Activated CD4-positive, alpha-beta T cell treated with anti-CD3 and anti-CD28 coated beads for 36 hours (primary cell): ENCODE measurements at regions of chr1 and their contacts with region 1.

Region 1: DNA sequence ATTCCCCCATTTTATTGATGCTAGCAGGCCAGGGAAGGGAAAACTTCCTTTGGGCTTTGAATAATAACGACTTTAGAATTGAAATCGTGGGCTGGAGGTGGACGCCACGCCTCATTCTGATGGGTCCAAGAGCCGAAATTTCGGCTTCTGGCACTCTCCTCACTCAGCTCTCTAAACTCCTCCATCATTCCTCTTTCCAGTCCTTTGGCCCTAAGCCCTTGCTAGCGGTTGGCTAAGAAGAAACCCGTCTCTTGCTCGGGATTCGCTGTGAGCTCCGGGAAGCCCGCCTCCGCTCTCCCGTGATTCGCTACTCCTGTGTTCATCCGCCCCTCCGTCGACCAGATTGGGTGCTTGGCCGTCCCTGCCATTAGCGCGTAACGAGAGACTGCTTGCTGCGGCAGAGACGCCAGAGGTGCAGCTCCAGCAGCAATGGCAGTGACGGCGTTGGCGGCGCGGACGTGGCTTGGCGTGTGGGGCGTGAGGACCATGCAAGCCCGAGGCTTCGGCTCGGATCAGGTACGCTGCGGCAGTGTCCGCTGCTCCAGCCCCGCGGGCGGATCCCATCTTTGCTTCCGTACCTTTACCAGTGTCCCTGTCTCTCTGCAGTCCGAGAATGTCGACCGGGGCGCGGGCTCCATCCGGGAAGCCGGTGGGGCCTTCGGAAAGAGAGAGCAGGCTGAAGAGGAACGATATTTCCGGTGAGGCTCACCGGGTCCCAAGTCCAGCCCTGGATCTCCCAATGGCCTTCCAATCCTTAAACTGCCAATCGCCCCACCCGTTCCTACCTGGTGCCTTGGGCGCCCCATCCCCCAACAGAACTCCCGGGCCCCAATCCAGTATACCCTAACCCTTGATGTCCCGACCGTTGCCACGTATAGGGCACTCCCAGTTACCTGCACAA is at the start of gene ATP5IF1:
- DNase-seq: peak; percentile 97
- ATAC-seq: peak; percentile 97
- H3K4me3 Mint-ChIP-seq: no peak within 1 kb of the TSS
- H3K27ac Mint-ChIP-seq: no peak within 1 kb of the TSS
- H3K4me1 Mint-ChIP-seq: peaks cover 15% of the 10 kb centered on the region
- H3K27me3 Mint-ChIP-seq: no peaks in the 10 kb centered on the region
- total RNA-seq, gene ATP5IF1: 192 to 195 TPM

Region 2: DNA sequence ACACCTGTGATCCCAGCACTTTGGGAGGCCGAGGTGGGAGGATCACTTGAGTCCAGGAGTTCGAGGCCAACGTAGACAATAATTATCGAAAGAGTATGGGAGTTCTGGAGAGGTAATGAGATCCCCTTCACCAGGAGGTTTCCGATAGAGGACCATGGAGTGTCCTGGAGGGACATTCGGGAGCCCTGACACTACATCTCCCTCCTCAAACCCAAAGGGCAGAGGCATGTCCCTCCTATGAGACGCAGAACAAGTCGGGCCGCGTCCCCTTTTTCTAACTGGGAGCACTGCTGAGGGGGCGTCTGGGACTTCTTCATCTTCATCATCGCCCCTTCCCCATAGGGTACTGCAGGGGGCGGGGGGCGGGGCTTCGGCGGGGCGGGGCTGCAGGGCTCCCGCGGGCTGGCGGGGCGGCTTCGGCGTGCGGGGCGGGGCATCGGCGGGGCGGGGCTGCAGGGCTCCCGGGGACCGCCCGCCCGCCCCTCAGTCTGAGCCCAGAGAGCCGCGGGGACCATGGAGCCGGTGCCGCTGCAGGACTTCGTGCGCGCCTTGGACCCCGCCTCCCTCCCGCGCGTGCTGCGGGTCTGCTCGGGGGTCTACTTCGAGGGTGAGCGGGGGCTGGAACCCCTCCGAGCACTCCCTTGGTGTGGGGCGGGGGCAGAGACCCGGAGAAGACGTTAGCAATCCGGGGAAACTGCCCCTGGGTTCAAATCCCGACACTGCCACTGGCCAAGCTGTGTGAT is 363.8 kb before region 1 on chr1 and contains the start of gene THEMIS2:
- CTCF ChIA-PET with region 1: no interaction called
- POLR2A ChIA-PET with region 1: no interaction called
- intact Hi-C with region 1: loop called in 1 of 2 experiments (anchors 1 kb)
- DNase-seq: peak; percentile 90
- ATAC-seq: peak; percentile 81
- H3K4me3 Mint-ChIP-seq: peak within 1 kb of the TSS; percentile 87
- H3K27ac Mint-ChIP-seq: peak within 1 kb of the TSS; percentile 83
- H3K4me1 Mint-ChIP-seq: peaks cover 36% of the 10 kb centered on the region
- H3K27me3 Mint-ChIP-seq: no peaks in the 10 kb centered on the region
- total RNA-seq, gene THEMIS2: 14.2 to 16.2 TPM

Region 3: DNA sequence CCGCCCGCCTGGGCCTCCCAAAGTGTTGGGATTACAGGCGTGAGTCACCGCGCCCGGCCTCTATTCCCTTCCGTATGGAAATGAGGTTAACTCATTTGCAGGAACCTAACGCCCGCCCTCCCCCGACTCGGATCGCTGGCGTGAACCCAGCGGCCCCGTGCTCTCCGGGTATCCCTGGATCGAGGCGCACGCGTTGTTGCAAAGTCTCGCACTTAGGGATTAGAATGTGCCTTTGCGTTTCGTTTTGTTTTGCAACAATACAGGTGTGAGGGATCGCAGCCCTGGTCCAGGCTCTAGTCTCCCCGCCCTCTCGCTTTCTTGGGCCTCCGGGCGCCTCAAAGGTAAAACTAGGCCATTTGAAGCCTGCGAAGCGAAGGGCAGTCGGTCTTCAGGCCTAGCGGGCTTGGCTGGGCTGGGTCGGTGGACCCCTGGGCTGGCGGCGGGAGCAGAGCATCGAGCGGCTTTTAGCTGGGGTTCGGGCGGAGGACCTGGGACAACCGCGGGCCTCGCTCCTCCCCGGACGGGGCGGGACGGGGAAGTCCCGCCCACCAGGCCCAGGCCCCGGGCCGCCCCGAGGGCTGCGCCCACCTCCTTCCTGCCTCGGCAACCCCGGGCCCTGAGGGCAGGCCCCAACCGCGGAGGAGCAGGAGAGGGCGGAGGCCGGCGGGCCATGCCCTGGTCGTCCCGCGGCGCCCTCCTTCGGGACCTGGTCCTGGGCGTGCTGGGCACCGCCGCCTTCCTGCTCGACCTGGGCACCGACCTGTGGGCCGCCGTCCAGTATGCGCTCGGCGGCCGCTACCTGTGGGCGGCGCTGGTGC is 276.4 kb before region 1 on chr1 and contains the start of gene XKR8:
- CTCF ChIA-PET with region 1: no interaction called
- POLR2A ChIA-PET with region 1: no interaction called
- intact Hi-C with region 1: loop called in 1 of 2 experiments (anchors 1 kb)
- DNase-seq: peak; percentile 89
- ATAC-seq: peak; percentile 98
- H3K4me3 Mint-ChIP-seq: peak within 1 kb of the TSS; percentile 77
- H3K27ac Mint-ChIP-seq: peak within 1 kb of the TSS; percentile 84
- H3K4me1 Mint-ChIP-seq: peaks cover 17% of the 10 kb centered on the region
- H3K27me3 Mint-ChIP-seq: no peaks in the 10 kb centered on the region
- total RNA-seq, gene XKR8: 4.2 to 6.0 TPM

Region 4: GRCh38 chr1:28259307-28260167 is 23.5 kb after region 1 on chr1 and contains the start of gene SESN2:
- CTCF ChIA-PET with region 1: interaction called, 5 read pairs
- POLR2A ChIA-PET with region 1: interaction called, 4 read pairs
- intact Hi-C with region 1: loop called (anchors 1 kb)
- DNase-seq: peak; percentile 100
- ATAC-seq: peak; percentile 93
- H3K4me3 Mint-ChIP-seq: peak within 1 kb of the TSS; percentile 81
- H3K27ac Mint-ChIP-seq: peak within 1 kb of the TSS; percentile 99
- H3K4me1 Mint-ChIP-seq: peaks cover 42% of the 10 kb centered on the region
- H3K27me3 Mint-ChIP-seq: no peaks in the 10 kb centered on the region
- total RNA-seq, gene SESN2: 32.9 to 33.3 TPM

Region 5: GRCh38 chr1:28369371-28370238 is 133.6 kb after region 1 on chr1 and contains the start of gene PHACTR4:
- CTCF ChIA-PET with region 1: no interaction called
- POLR2A ChIA-PET with region 1: interaction called, 3 read pairs
- intact Hi-C with region 1: loop called in 1 of 2 experiments (anchors 1 kb)
- DNase-seq: peak; percentile 90
- ATAC-seq: peak; percentile 93
- H3K4me3 Mint-ChIP-seq: peak within 1 kb of the TSS; percentile 92
- H3K27ac Mint-ChIP-seq: peak within 1 kb of the TSS; percentile 92
- H3K4me1 Mint-ChIP-seq: peaks cover 25% of the 10 kb centered on the region
- H3K27me3 Mint-ChIP-seq: no peaks in the 10 kb centered on the region
- total RNA-seq, gene PHACTR4: 23.0 to 30.1 TPM

Region 6: GRCh38 chr1:28552758-28553663 is 317.0 kb after region 1 on chr1 and contains the start of gene TRNAU1AP:
- CTCF ChIA-PET with region 1: no interaction called
- POLR2A ChIA-PET with region 1: interaction called, 11 read pairs
- intact Hi-C with region 1: no loop called
- DNase-seq: peak; percentile 99
- ATAC-seq: peak; percentile 94
- H3K4me3 Mint-ChIP-seq: peak within 1 kb of the TSS; percentile 92
- H3K27ac Mint-ChIP-seq: peak within 1 kb of the TSS; percentile 95
- H3K4me1 Mint-ChIP-seq: peaks cover 24% of the 10 kb centered on the region
- H3K27me3 Mint-ChIP-seq: no peaks in the 10 kb centered on the region
- total RNA-seq, gene TRNAU1AP: 50.7 to 60.2 TPM